Tibial artery (tissue), 4 donors: ENCODE measurements at regions of chr2 and their contacts with region 1.

Region 1: GRCh38 chr2:42047488-42048298 is at the start of gene PKDCC:
- DNase-seq: peak; percentile 82 to 94
- H3K4me3 ChIP-seq: peak within 1 kb of the TSS; percentile 79 to 94
- H3K27ac ChIP-seq: peak within 1 kb of the TSS; percentile 86 to 97
- H3K4me1 ChIP-seq: peaks cover 0 to 46% (median 42%) of the 10 kb centered on the region in 4 donors
- H3K27me3 ChIP-seq: no peaks in the 10 kb centered on the region
- CTCF ChIP-seq: peak in 1 of 2 experiments; percentile 16

Region 2: GRCh38 chr2:41994207-41994606 is 53.5 kb before region 1 on chr2:
- intact Hi-C with region 1: loop called (anchors 10 kb)
- DNase-seq: no peak
- H3K4me3 ChIP-seq: no peak overlapping the region
- H3K27ac ChIP-seq: no peak overlapping the region
- H3K4me1 ChIP-seq: peaks cover 0 to 35% (median 24%) of the 10 kb centered on the region in 4 donors
- H3K27me3 ChIP-seq: no peaks in the 10 kb centered on the region
- CTCF ChIP-seq: no peak

Region 3: DNA sequence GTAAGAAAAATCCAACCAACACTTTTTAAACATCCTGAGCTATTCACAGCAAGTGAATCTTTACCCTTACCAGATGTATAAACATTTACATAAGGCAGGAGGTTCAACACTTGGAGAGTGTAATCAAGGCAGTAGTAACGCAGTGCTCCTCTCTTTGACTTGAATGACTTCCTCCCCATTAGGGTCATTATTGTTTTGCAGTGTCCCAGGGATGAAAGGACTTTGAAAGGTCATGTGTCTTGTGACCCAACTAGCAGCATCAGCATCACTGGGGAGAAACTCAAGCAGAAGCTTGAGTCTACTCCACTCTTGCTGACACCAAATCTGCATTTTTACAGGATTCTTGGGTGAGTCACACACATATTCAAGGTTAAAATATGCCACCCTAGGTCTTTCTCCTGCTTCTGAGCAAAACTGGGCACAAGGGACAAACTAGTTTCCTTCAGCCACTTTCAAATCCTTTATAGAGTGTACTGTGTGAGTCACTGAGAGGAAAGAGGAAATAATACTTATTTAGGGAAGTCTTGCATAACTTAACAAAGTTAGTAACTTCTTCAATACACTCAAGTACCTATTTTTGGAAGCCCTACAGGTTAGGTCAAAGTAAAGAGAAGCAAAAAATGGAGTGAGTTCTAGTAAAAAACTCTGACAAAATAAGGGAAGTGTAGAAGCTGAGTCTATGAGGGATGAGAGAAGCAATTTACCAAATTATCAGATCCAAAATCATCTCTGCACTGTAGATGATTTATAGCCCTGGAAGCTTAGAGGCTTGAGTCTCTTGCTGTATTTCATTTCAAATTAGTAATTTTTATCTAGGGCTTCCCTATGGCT is 70.4 kb after region 1 on chr2:
- intact Hi-C with region 1: no loop called
- DNase-seq: no peak
- H3K4me3 ChIP-seq: no peak overlapping the region
- H3K27ac ChIP-seq: peak overlapping the region; percentile 34 to 40
- H3K4me1 ChIP-seq: peaks cover 0 to 26% (median 11%) of the 10 kb centered on the region in 4 donors
- H3K27me3 ChIP-seq: no peaks in the 10 kb centered on the region
- CTCF ChIP-seq: no peak

Region 4: DNA sequence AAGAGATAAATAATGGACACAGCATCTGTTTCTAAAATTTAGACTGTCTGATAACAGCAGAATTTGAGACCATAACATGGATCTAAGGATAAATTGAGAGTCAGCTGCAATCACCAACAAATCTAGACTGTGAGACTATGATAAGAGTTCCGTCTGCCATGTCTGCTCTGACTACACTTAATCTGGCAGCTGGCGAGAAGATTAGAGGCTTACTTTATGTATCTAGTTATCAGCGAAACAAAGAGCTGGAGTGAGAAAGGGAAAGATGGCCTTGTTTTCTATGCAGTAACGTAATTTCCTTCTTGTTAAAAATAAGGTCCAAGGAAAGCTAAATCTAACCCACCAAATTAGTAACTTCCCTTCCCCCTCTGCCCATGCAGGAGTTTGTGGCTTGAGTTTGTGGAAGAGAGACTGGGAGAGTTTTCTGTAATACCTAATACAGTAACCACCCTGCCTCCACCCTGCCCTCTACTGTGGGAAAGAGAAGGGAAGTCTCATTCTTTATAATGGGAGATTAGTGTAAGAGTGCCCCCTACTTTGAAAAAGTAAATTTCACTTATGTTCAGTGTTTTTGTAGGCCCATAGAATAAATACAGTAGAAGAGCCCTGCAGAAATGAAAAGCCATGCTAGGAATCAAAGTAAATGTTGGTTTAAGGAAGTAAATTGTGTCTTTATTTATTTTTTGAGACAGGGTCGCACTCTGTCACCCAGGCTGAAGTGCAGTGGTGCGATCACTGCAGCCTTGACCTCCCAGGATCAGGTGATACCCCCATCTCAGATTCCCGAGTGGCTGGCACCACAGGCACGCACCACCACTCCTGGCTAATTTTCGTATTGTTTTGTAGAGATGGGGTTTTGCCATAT is 148.9 kb after region 1 on chr2:
- intact Hi-C with region 1: no loop called
- DNase-seq: peak in 1 of 2 donors; percentile 28
- H3K4me3 ChIP-seq: no peak overlapping the region
- H3K27ac ChIP-seq: no peak overlapping the region
- H3K4me1 ChIP-seq: peaks cover 0 to 44% (median 15%) of the 10 kb centered on the region in 4 donors
- H3K27me3 ChIP-seq: no peaks in the 10 kb centered on the region
- CTCF ChIP-seq: peak; percentile 50 to 54